CD8-positive, alpha-beta T cell (primary cell): ENCODE measurements at regions of chr2 and their contacts with region 1.

Region 1: DNA sequence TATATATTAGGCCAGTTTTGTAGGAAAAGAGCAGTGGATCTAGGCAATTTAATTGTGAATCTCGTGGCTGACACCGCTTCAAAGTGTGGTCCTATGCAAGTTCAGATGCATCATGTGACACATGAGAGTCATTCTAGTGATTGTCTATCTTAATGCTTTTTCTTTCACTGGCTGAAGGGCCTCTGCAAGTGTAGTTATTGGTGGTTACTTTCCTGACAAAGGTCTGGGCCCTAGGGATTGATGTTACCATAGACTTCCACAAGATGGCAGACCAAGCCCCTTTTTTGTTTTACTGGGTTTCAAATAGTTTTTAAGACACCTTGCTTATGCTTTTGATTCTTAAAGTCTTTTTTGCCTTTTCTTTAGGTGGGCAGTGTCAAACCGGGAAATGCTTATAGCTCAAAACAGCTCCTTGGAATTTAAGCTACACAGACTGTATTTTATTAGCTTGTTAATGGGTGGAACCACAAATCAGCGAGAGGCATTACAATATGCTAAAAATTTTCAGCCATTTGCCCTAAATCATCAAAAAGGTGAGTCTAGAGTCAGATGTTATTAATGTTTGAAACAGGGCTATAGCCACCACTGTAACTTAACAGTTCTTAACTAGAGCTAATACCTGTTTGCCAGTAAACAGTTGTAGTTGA is 25.9 kb downstream of the CD8A start:
- DNase-seq: peak in 6 of 9 experiments; percentile 47 to 84 (median 54)
- ATAC-seq: peak; percentile 84
- H3K4me3 ChIP-seq: no peak overlapping the region
- H3K4me3 Mint-ChIP-seq: no peak overlapping the region
- H3K27ac ChIP-seq: peak overlapping the region in 1 of 2 experiments; percentile 43
- H3K27ac Mint-ChIP-seq: peak overlapping the region; percentile 84
- H3K4me1 ChIP-seq: peaks cover 9% of the 10 kb centered on the region
- H3K4me1 Mint-ChIP-seq: peaks cover 30% of the 10 kb centered on the region
- H3K27me3 ChIP-seq: no peaks in the 10 kb centered on the region
- H3K27me3 Mint-ChIP-seq: no peaks in the 10 kb centered on the region
- CTCF ChIP-seq: peak; percentile 78

Region 2: GRCh38 chr2:86518481-86518880 is 246.3 kb before region 1 on chr2:
- CTCF ChIA-PET with region 1: interaction called, 12 read pairs
- POLR2A ChIA-PET with region 1: no interaction called
- intact Hi-C with region 1: loop called (anchors 2 to 5 kb)
- DNase-seq: peak; percentile 1 to 71 (median 50)
- ATAC-seq: peak; percentile 81
- H3K4me3 ChIP-seq: no peak overlapping the region
- H3K4me3 Mint-ChIP-seq: no peak overlapping the region
- H3K27ac ChIP-seq: no peak overlapping the region
- H3K27ac Mint-ChIP-seq: no peak overlapping the region
- H3K4me1 ChIP-seq: peaks cover 4% of the 10 kb centered on the region
- H3K4me1 Mint-ChIP-seq: peaks cover 10% of the 10 kb centered on the region
- H3K27me3 ChIP-seq: no peaks in the 10 kb centered on the region
- H3K27me3 Mint-ChIP-seq: no peaks in the 10 kb centered on the region
- CTCF ChIP-seq: peak; percentile 74

Region 3: GRCh38 chr2:86747711-86748639 is 16.8 kb before region 1 on chr2:
- CTCF ChIA-PET with region 1: interaction called, 26 read pairs
- POLR2A ChIA-PET with region 1: interaction called, 3 read pairs
- intact Hi-C with region 1: no loop called
- DNase-seq: peak in 2 of 9 experiments; percentile 14 to 26
- ATAC-seq: no peak
- H3K4me3 ChIP-seq: no peak overlapping the region
- H3K4me3 Mint-ChIP-seq: no peak overlapping the region
- H3K27ac ChIP-seq: no peak overlapping the region
- H3K27ac Mint-ChIP-seq: no peak overlapping the region
- H3K4me1 ChIP-seq: peaks cover 7% of the 10 kb centered on the region
- H3K4me1 Mint-ChIP-seq: peaks cover 64% of the 10 kb centered on the region
- H3K27me3 ChIP-seq: no peaks in the 10 kb centered on the region
- H3K27me3 Mint-ChIP-seq: no peaks in the 10 kb centered on the region
- CTCF ChIP-seq: no peak

Region 4: DNA sequence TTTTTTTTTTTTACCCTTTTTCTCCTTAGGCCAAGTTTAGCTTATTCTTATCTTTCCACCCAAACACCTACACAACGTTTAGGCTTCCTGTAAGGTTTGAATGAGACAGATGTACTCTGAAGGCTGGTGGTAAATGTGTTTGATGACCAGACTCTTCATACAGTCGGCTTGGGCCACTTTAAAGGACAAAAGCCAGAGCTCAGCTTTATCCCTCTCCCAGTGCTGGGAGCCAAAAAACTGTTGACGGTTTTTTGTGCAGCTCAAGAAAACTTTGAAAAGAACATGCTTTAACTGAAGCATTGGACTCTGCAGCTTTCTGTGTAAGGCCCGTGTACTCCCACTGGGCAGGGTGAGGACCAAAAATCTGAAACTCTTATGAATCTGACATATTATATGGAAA is 10.6 kb after region 1 on chr2:
- CTCF ChIA-PET with region 1: interaction called, 169 read pairs
- POLR2A ChIA-PET with region 1: interaction called, 4 read pairs
- intact Hi-C with region 1: loop called in 1 of 2 experiments (anchors 1 kb)
- DNase-seq: no peak
- ATAC-seq: no peak
- H3K4me3 ChIP-seq: no peak overlapping the region
- H3K4me3 Mint-ChIP-seq: no peak overlapping the region
- H3K27ac ChIP-seq: no peak overlapping the region
- H3K27ac Mint-ChIP-seq: no peak overlapping the region
- H3K4me1 ChIP-seq: no peaks in the 10 kb centered on the region
- H3K4me1 Mint-ChIP-seq: peaks cover 19% of the 10 kb centered on the region
- H3K27me3 ChIP-seq: no peaks in the 10 kb centered on the region
- H3K27me3 Mint-ChIP-seq: no peaks in the 10 kb centered on the region
- CTCF ChIP-seq: no peak

Region 5: GRCh38 chr2:86790676-86791572 is 26.1 kb after region 1 on chr2 and contains the start of gene CD8A:
- CTCF ChIA-PET with region 1: interaction called, 169 read pairs
- POLR2A ChIA-PET with region 1: interaction called, 17 read pairs
- intact Hi-C with region 1: loop called in 1 of 2 experiments (anchors 1 kb)
- DNase-seq: peak; percentile 60 to 93 (median 82)
- ATAC-seq: peak; percentile 23
- H3K4me3 ChIP-seq: peak within 1 kb of the TSS; percentile 93 to 98
- H3K4me3 Mint-ChIP-seq: peak within 1 kb of the TSS; percentile 95
- H3K27ac ChIP-seq: peak within 1 kb of the TSS; percentile 95 to 99
- H3K27ac Mint-ChIP-seq: peak within 1 kb of the TSS; percentile 99
- H3K4me1 ChIP-seq: peaks cover 69% of the 10 kb centered on the region
- H3K4me1 Mint-ChIP-seq: peaks cover 73% of the 10 kb centered on the region
- H3K27me3 ChIP-seq: no peaks in the 10 kb centered on the region
- H3K27me3 Mint-ChIP-seq: no peaks in the 10 kb centered on the region
- CTCF ChIP-seq: no peak
- total RNA-seq, gene CD8A: 502 to 503 TPM

Region 6: DNA sequence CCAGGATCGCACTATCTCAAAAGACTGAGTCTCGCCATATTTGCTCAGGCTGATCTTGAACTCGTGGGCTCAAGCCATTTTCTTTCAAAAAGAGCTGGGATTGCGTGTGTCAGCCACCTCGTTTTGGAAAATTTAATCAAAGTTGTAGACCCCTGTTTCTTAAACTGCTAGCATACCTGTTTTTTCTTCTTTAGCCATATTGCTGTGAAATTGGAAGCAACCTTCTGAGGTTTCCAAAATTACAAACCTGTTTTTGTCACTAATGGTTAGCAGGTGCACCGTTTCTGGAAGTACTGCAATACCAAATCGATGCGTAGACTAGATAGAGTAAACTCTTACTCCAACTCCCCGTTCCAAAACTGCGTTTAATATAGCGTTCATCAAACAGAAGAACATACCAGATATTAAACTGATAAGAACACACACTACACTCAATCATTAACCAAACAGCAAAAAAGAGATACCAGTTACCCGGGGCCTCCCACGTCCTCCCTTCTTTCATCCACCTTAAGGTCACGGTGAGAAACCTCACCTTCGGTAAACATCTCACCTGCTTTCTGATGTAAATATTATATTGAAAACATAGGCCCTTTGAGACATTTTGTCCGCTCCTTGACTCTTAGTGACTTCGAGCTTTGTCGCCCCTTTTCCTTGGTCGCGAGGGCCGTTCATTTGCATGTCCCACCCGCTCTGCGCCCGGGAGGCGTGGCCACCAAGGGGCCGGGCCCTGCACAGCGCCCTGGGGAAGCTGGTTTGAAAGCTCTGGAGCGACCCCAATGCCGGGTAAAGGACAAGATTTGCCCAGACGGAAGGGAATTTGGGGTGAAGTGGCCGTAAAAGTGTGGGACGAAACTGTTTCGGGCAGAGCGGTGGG is 1251.5 kb after region 1 on chr2 and contains the start of gene RNU2-63P:
- CTCF ChIA-PET with region 1: no interaction called
- POLR2A ChIA-PET with region 1: no interaction called
- intact Hi-C with region 1: loop called in 1 of 2 experiments (anchors 10 kb)
- DNase-seq: peak; percentile 65 to 89 (median 79)
- ATAC-seq: peak; percentile 86
- H3K4me3 ChIP-seq: peak within 1 kb of the TSS; percentile 68 to 92
- H3K4me3 Mint-ChIP-seq: peak within 1 kb of the TSS; percentile 100
- H3K27ac ChIP-seq: peak within 1 kb of the TSS; percentile 89 to 90
- H3K27ac Mint-ChIP-seq: peak within 1 kb of the TSS; percentile 100
- H3K4me1 ChIP-seq: peaks cover 5% of the 10 kb centered on the region
- H3K4me1 Mint-ChIP-seq: peaks cover 22% of the 10 kb centered on the region
- H3K27me3 ChIP-seq: no peaks in the 10 kb centered on the region
- H3K27me3 Mint-ChIP-seq: no peaks in the 10 kb centered on the region
- CTCF ChIP-seq: no peak
- total RNA-seq, gene RNU2-63P: 4.4 to 9.1 TPM